B cell (primary cell): ENCODE measurements at regions of chr6 and their contacts with region 1.

Region 1: GRCh38 chr6:149473080-149474052 is 11.4 kb downstream of the ZC3H12D start:
- DNase-seq: peak; percentile 65
- ATAC-seq: peak; percentile 34
- H3K4me3 ChIP-seq: peak overlapping the region in 4 of 5 experiments; percentile 5 to 55 (median 38)
- H3K4me3 Mint-ChIP-seq: peak overlapping the region; percentile 89
- H3K27ac ChIP-seq: peak overlapping the region; percentile 67 to 84
- H3K27ac Mint-ChIP-seq: peak overlapping the region; percentile 94
- H3K4me1 ChIP-seq: peaks cover 87 to 98% of the 10 kb centered on the region in 2 donors
- H3K4me1 Mint-ChIP-seq: peaks cover 84% of the 10 kb centered on the region
- H3K27me3 ChIP-seq: no peaks in the 10 kb centered on the region
- H3K27me3 Mint-ChIP-seq: no peaks in the 10 kb centered on the region
- CTCF ChIP-seq: peak; percentile 48

Region 2: DNA sequence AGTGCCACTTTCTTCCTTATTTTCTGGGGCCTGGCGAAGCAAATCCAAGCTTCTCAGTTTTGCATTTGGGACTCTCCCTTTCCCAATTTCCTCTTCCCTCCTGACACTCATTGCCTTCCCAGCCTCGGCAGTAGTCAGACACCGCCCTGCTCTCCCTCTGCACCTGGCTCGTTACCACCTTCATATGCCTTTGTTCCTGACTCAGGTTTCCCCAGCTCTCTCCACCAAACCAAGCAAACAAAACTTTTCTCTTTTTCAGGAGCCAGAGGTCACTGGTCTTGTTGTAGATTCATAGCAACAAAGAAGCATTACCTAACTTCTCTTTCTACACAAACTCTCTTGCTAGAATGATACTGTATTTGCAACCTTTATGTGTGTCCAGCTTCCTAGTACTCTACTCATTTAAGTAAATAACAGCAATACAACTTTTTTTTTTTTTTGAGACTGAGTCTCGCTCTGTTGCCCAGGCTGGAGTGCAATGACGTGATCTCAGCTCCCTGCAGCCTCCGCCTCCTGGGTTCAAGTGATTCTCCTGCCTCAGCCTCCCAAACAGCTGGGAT is 20.5 kb after region 1 on chr6:
- CTCF ChIA-PET with region 1: interaction called, 15 read pairs
- POLR2A ChIA-PET with region 1: interaction called, 23 read pairs
- intact Hi-C with region 1: no loop called
- DNase-seq: no peak
- ATAC-seq: no peak
- H3K4me3 ChIP-seq: peak overlapping the region in 1 of 5 experiments; percentile 37
- H3K4me3 Mint-ChIP-seq: peak overlapping the region; percentile 71
- H3K27ac ChIP-seq: peak overlapping the region in 1 of 2 donors; percentile 79
- H3K27ac Mint-ChIP-seq: peak overlapping the region; percentile 79
- H3K4me1 ChIP-seq: peaks cover 51 to 56% of the 10 kb centered on the region in 2 donors
- H3K4me1 Mint-ChIP-seq: peaks cover 78% of the 10 kb centered on the region
- H3K27me3 ChIP-seq: no peaks in the 10 kb centered on the region
- H3K27me3 Mint-ChIP-seq: no peaks in the 10 kb centered on the region
- CTCF ChIP-seq: no peak

Region 3: DNA sequence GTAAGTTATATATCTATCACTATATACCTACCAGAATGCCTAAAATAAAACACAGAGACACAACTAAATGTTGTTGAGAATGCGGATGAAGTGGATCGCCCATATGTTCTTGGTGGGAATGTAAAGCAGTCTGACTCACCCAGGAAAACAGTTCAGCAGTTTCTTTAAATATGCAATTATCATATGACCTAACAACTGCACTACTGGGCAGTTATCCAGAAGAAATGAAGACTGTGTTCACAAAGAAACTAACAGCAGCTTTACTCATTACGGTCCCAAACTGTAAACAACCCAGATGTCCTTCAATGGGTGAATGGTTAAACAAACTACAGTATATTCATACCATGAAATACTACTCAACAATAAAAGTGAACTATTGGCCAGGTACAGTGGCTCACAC is 25.7 kb after region 1 on chr6:
- CTCF ChIA-PET with region 1: interaction called, 15 read pairs
- POLR2A ChIA-PET with region 1: interaction called, 23 read pairs
- intact Hi-C with region 1: no loop called
- DNase-seq: no peak
- ATAC-seq: no peak
- H3K4me3 ChIP-seq: no peak overlapping the region
- H3K4me3 Mint-ChIP-seq: no peak overlapping the region
- H3K27ac ChIP-seq: peak overlapping the region in 1 of 2 donors; percentile 21
- H3K27ac Mint-ChIP-seq: peak overlapping the region; percentile 74
- H3K4me1 ChIP-seq: peaks cover 26 to 27% of the 10 kb centered on the region in 2 donors
- H3K4me1 Mint-ChIP-seq: peaks cover 55% of the 10 kb centered on the region
- H3K27me3 ChIP-seq: no peaks in the 10 kb centered on the region
- H3K27me3 Mint-ChIP-seq: no peaks in the 10 kb centered on the region
- CTCF ChIP-seq: no peak